Body of pancreas (tissue), 4 donors: ENCODE measurements at regions of chr10 and their contacts with region 1.

Region 1: DNA sequence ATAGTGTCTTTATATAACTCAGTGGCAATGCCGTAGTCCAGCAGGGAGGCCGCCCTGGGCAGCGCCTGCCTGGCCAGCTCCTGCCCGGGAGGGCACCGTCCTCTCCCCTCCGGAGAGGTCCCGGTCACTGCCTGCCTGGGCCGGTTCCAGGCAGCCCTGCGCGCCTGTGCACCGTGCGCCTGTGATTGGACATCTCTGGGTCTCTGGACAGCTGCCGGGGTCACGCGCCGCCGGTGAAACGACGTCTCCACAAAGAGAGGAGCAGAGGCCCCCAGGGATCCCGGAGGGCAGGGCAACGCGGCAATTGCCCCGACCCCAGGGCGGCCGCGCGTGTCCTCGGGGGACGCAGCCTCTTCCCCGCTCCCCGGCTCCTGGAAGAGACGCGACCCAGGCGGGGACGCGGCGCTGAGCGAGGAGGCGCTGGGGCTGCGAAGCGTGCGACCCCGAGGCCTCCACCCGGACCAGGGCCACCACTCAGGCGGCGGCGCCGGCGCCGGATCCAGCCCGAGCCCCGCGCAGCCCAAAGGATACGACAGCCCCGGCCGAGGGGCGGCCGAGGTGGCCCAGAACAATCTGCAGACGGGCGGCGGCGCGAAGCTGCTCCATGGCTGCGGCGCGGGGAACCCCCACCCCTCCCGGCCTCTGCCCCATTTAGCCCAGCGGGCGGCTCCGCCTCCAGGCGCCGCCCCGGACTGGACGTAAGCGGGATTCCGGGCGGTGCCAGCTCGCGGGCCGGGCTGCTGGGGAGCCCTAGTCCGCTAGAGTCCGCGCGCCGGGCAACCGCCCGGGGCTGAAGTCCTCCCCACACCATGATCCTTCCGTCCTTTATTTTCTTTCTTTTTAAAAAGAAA is at the start of gene PHYH:
- DNase-seq: peak; percentile 89 to 94 (median 92)
- ATAC-seq: peak; percentile 86
- H3K4me3 ChIP-seq: peak within 1 kb of the TSS; percentile 55 to 59
- H3K27ac ChIP-seq: peak within 1 kb of the TSS; percentile 88 to 100 (median 99)
- H3K4me1 ChIP-seq: peaks cover 28% of the 10 kb centered on the region
- H3K27me3 ChIP-seq: no peaks in the 10 kb centered on the region
- CTCF ChIP-seq: no peak
- POLR2A ChIP-seq: peak; percentile 86 to 93 (median 89)
- total RNA-seq, gene PHYH: 22.1 to 23.4 TPM

Region 2: GRCh38 chr10:13160934-13161856 is 138.5 kb before region 1 on chr10 and contains the start of gene MCM10:
- intact Hi-C with region 1: loop called (anchors 10 kb)
- DNase-seq: peak; percentile 99
- ATAC-seq: peak; percentile 100
- H3K4me3 ChIP-seq: peak within 1 kb of the TSS in 1 of 2 donors; percentile 12
- H3K27ac ChIP-seq: no peak within 1 kb of the TSS
- H3K4me1 ChIP-seq: peaks cover 12% of the 10 kb centered on the region
- H3K27me3 ChIP-seq: no peaks in the 10 kb centered on the region
- CTCF ChIP-seq: peak; percentile 75 to 95 (median 94)
- POLR2A ChIP-seq: peak in 1 of 3 donors; percentile 19
- total RNA-seq, gene MCM10: 0.26 TPM in 1 of 2 donors, not detected in the other

Region 3: DNA sequence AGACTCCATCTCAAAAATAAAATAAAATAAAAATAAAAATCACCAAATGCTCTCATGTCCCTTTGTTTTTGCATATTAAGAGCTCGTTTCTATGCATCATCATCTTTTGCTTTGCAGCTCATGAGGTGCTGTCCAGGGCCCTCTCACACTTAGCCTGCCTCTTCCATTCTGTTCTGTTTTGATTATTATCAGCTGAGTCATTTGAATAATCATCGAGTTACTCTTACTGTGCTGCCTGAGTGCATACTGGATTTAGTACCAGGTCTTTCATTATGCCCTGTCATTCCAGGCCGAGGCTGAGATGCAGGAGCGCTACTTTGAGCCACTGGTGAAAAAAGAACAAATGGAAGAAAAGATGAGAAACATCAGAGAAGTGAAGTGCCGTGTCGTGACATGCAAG is 98.5 kb before region 1 on chr10:
- intact Hi-C with region 1: no loop called
- DNase-seq: no peak
- ATAC-seq: no peak
- H3K4me3 ChIP-seq: no peak overlapping the region
- H3K27ac ChIP-seq: no peak overlapping the region
- H3K4me1 ChIP-seq: no peaks in the 10 kb centered on the region
- H3K27me3 ChIP-seq: no peaks in the 10 kb centered on the region
- CTCF ChIP-seq: no peak
- POLR2A ChIP-seq: no peak

Region 4: DNA sequence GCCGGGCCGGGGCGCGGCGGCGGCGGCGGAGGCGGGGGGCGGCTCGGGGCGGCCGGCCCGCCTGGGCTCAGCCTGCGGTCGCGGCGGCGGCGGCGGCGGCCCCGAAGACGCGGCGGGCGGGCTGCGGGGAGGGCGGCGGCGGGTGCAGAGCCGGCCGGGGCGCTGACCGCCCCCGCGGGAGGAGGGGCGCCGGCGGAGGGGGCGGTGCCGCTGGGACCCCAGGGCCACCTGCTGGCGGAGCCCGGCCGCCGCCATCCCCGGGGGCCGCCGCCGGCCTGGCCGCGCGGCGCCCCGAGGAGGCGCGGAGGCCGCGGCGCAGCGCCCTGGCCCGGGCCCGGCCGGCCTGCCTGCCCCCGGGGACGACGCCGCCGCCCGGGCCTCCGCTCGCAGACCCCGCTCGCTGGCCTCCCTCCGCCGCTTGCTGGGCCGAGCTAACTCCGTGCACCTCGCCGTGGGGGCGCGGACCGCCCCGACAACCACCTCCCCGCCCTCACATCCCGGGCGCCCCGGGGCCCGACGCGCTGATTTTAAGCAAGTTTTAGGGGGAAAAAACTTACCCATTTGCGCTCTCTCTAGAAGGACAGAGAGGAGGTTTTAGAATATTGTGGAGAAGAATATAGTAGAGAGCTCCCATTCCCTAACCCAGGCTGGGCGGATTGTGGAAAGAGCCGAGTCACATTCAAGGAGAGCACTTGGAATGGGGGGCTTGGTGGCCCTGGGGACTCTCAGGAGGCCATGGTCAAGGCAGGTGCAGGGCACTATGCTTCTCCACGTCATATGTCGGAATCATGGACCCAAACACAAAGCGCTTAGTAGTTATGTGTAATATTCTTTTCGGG is 229.4 kb after region 1 on chr10 and contains the start of gene BEND7:
- intact Hi-C with region 1: no loop called
- DNase-seq: peak; percentile 48 to 73 (median 49)
- ATAC-seq: peak; percentile 83
- H3K4me3 ChIP-seq: peak within 1 kb of the TSS; percentile 62 to 65
- H3K27ac ChIP-seq: peak within 1 kb of the TSS; percentile 39 to 81 (median 75)
- H3K4me1 ChIP-seq: peaks cover 27% of the 10 kb centered on the region
- H3K27me3 ChIP-seq: no peaks in the 10 kb centered on the region
- CTCF ChIP-seq: peak in 2 of 7 experiments; percentile 43 to 50
- POLR2A ChIP-seq: peak in 1 of 3 donors; percentile 29
- total RNA-seq, gene BEND7: 13.7 to 17.5 TPM

Region 5: GRCh38 chr10:13556676-13557319 is 257.1 kb after region 1 on chr10:
- intact Hi-C with region 1: no loop called
- DNase-seq: no peak
- ATAC-seq: no peak
- H3K4me3 ChIP-seq: no peak overlapping the region
- H3K27ac ChIP-seq: peak overlapping the region in 2 of 4 donors; percentile 30 to 39
- H3K4me1 ChIP-seq: peaks cover 14% of the 10 kb centered on the region
- H3K27me3 ChIP-seq: no peaks in the 10 kb centered on the region
- CTCF ChIP-seq: no peak
- POLR2A ChIP-seq: no peak